ENCODE measurements at regions of chr5 and their contacts with region 1.

Region 1: GRCh38 chr5:24026288-24026687 is 518.9 kb downstream of the PRDM9 start:
- DNase-seq: no peak
- ATAC-seq: no peak
- H3K4me3 ChIP-seq: no peak overlapping the region
- H3K4me3 Mint-ChIP-seq: no peak overlapping the region
- H3K27ac ChIP-seq: no peak overlapping the region
- H3K27ac Mint-ChIP-seq: no peak overlapping the region
- H3K4me1 ChIP-seq: no peaks in the 10 kb centered on the region
- H3K4me1 Mint-ChIP-seq: no peaks in the 10 kb centered on the region
- H3K27me3 ChIP-seq: no peaks in the 10 kb centered on the region
- H3K27me3 Mint-ChIP-seq: no peaks in the 10 kb centered on the region

Region 2: GRCh38 chr5:24045034-24045433 is 18.7 kb after region 1 on chr5:
- CTCF ChIA-PET with region 1: no interaction called
- POLR2A ChIA-PET with region 1: interaction called in 1 of 2 experiments, 10 read pairs
- DNase-seq: no peak
- ATAC-seq: no peak
- H3K4me3 ChIP-seq: no peak overlapping the region
- H3K4me3 Mint-ChIP-seq: no peak overlapping the region
- H3K27ac ChIP-seq: no peak overlapping the region
- H3K27ac Mint-ChIP-seq: no peak overlapping the region
- H3K4me1 ChIP-seq: no peaks in the 10 kb centered on the region
- H3K4me1 Mint-ChIP-seq: no peaks in the 10 kb centered on the region
- H3K27me3 ChIP-seq: no peaks in the 10 kb centered on the region
- H3K27me3 Mint-ChIP-seq: no peaks in the 10 kb centered on the region

Region 3: DNA sequence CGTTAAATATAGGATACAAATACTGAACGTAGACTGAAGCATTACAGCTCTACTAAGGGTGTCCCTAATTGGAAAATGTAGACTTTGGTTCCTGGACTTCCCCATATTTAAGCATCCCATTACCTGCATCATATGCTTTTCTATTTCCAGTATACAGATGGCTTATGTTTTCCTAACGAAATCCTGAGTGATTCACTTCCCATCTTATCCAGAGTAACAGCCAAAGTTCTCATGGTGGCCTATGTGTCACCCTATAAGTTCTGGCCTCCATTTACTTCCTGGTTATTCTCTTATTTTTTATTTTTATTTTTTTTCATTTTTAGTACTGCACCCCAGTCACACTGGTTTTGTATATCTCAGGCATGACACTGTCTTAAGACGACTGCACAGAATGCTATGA is 33.4 kb after region 1 on chr5:
- CTCF ChIA-PET with region 1: interaction called in 1 of 2 experiments, 11 read pairs
- POLR2A ChIA-PET with region 1: no interaction called
- DNase-seq: no peak
- ATAC-seq: no peak
- H3K4me3 ChIP-seq: no peak overlapping the region
- H3K4me3 Mint-ChIP-seq: no peak overlapping the region
- H3K27ac ChIP-seq: no peak overlapping the region
- H3K27ac Mint-ChIP-seq: no peak overlapping the region
- H3K4me1 ChIP-seq: no peaks in the 10 kb centered on the region
- H3K4me1 Mint-ChIP-seq: no peaks in the 10 kb centered on the region
- H3K27me3 ChIP-seq: no peaks in the 10 kb centered on the region
- H3K27me3 Mint-ChIP-seq: no peaks in the 10 kb centered on the region

Measured in T-cell (primary cell).